Stomach (tissue), 19 donors: ENCODE measurements at regions of chr16 and their contacts with region 1.

Region 1: DNA sequence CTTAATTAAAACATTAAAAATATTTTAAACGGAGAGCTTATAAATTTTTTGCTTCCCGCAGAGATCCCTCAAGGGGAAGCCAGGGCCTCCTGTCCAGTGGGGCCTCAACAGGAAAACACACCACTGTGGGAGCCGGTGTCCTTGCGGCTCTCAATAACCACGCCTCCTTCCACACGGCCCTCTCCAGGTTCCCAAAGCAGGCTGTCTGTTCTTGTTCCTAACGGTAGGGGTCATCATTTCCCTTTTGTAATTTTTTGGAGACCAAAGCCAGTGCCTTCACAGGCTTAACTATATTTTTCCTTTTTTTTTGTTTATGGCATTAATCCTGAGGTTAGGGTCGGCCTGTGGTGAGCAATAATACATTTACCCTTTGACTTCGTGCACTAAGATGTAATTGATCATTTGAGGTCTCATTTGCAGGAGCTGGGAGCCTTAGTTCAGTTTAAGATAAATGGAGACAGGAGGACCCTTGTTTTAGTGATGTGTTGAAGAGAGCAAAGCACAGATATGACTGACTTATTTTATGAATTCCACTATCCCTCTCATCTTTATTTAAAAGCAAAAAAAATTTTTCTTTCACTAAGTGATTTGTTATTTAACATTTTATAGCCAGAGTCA is 77.5 kb upstream of the N4BP1 start:
- DNase-seq: peak; percentile 28 to 83
- H3K4me3 ChIP-seq: no peak overlapping the region
- H3K27ac ChIP-seq: no peak overlapping the region
- H3K4me1 ChIP-seq: peaks cover 0 to 6% (median 0%) of the 10 kb centered on the region in 4 donors
- H3K27me3 ChIP-seq: peaks cover 0 to 11% (median 0%) of the 10 kb centered on the region in 3 donors
- CTCF ChIP-seq: peak in 5 of 7 experiments; percentile 26 to 71 (median 52)
- EP300 ChIP-seq: no peak
- POLR2A ChIP-seq: no peak

Region 2: DNA sequence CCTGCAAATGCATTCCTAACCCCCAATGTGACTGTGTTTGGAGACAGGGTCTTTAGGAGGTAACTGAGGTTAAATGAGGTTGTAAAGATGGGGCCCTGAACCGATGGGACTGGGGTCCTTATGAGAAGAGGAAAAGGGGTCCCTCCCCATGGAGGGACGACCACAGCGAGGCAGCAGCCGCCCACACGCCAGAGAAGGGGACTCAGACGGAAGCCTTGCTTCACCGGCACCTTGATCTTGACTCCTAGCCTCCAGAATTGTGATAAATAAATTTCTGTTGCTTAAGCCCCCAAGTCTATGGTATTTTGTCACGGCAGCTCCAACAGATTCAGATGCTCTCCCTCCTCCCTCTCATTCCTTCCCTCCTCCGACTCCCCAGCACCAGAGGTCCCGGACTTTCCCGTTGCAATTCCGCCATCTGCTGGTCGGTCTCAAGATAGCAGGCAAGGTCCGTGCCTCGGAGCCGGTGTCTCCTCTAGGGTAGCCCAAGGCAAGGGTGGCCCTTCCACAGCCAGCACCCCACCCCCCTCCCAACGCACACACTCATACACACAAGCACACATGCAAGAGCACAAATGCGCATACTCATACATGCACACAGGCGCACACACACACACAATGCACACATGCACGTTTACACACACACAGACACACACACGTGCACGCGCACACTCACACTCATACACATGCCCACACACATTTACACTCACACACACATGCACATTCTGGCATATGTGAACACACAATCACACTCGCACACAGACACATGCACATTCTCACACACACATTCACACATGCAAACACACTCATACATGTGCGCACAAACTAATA is 663.0 kb after region 1 on chr16:
- intact Hi-C with region 1: loop called (anchors 5 kb)
- DNase-seq: peak; percentile 65 to 75
- H3K4me3 ChIP-seq: no peak overlapping the region
- H3K27ac ChIP-seq: no peak overlapping the region
- H3K4me1 ChIP-seq: no peaks in the 10 kb centered on the region
- H3K27me3 ChIP-seq: peaks cover 0 to 64% (median 20%) of the 10 kb centered on the region in 3 donors
- CTCF ChIP-seq: peak in 5 of 7 experiments; percentile 56 to 77 (median 74)
- EP300 ChIP-seq: no peak
- POLR2A ChIP-seq: no peak